Activated naive CD4-positive, alpha-beta T cell treated with anti-CD3 and anti-CD28 coated beads for 36 hours (primary cell): ENCODE measurements at regions of chr7 and their contacts with region 1.

Region 1: DNA sequence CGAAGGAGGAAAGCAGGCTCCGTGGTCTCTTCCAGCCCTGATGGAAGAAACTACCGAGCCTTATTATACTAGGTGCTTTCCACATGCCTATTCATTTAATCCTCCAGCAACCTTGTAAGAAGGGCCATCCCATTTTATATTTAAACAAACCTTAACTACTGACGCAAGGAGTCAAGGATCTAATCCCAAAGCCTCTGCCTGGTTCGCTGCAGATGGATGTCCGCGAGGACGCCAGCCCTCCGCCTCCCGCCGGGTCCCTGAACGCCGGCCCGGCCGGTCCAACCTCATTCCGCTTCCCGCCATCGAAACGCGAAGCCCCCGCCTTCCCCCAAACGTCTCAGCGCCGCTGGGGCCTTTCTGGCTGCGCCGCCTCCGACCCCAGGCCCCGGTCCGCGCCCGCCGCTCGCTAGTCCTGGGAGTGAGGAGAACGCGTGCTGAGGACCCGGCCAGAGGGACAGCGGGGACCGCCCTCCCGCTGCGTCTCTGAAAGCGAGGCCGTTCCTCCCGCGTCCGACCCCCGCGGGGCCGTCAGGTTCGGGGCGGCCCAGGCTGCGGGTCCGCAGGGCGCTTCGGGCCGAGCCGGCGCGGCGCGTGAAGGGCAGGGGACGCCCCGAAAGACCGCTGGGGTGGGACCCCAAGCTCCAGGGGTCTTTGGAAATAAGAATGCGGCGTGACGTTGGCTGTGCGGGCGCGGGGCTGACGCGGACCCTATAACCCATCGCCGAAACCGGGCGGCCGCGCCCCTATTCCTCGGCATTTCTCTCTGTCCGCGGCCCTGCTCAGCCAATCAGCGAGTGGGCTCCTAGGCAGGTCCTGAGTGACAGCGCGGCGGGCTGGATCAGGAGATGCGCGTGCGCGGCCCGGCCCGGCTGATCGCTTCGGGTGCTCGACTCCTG is at the start of gene ATP6V0E2:
- DNase-seq: peak; percentile 94
- H3K4me3 Mint-ChIP-seq: peak within 1 kb of the TSS; percentile 83
- H3K27ac Mint-ChIP-seq: peak within 1 kb of the TSS; percentile 88
- H3K4me1 Mint-ChIP-seq: peaks cover 72% of the 10 kb centered on the region
- H3K27me3 Mint-ChIP-seq: no peaks in the 10 kb centered on the region
- total RNA-seq, gene ATP6V0E2: 31.8 to 32.4 TPM

Region 2: GRCh38 chr7:149422129-149422913 is 451.0 kb before region 1 on chr7:
- CTCF ChIA-PET with region 1: no interaction called
- intact Hi-C with region 1: no loop called
- DNase-seq: peak; percentile 66
- H3K4me3 Mint-ChIP-seq: peak overlapping the region; percentile 67
- H3K27ac Mint-ChIP-seq: peak overlapping the region; percentile 65
- H3K4me1 Mint-ChIP-seq: peaks cover 7% of the 10 kb centered on the region
- H3K27me3 Mint-ChIP-seq: peaks cover 2% of the 10 kb centered on the region

Region 3: GRCh38 chr7:149598721-149599306 is 274.5 kb before region 1 on chr7:
- CTCF ChIA-PET with region 1: no interaction called
- intact Hi-C with region 1: loop called (anchors 2 kb)
- DNase-seq: peak; percentile 69
- H3K4me3 Mint-ChIP-seq: no peak overlapping the region
- H3K27ac Mint-ChIP-seq: peak overlapping the region; percentile 51
- H3K4me1 Mint-ChIP-seq: peaks cover 36% of the 10 kb centered on the region
- H3K27me3 Mint-ChIP-seq: no peaks in the 10 kb centered on the region

Region 4: GRCh38 chr7:149720372-149721248 is 152.7 kb before region 1 on chr7:
- CTCF ChIA-PET with region 1: no interaction called
- intact Hi-C with region 1: no loop called
- DNase-seq: no peak
- H3K4me3 Mint-ChIP-seq: no peak overlapping the region
- H3K27ac Mint-ChIP-seq: no peak overlapping the region
- H3K4me1 Mint-ChIP-seq: peaks cover 12% of the 10 kb centered on the region
- H3K27me3 Mint-ChIP-seq: no peaks in the 10 kb centered on the region

Region 5: DNA sequence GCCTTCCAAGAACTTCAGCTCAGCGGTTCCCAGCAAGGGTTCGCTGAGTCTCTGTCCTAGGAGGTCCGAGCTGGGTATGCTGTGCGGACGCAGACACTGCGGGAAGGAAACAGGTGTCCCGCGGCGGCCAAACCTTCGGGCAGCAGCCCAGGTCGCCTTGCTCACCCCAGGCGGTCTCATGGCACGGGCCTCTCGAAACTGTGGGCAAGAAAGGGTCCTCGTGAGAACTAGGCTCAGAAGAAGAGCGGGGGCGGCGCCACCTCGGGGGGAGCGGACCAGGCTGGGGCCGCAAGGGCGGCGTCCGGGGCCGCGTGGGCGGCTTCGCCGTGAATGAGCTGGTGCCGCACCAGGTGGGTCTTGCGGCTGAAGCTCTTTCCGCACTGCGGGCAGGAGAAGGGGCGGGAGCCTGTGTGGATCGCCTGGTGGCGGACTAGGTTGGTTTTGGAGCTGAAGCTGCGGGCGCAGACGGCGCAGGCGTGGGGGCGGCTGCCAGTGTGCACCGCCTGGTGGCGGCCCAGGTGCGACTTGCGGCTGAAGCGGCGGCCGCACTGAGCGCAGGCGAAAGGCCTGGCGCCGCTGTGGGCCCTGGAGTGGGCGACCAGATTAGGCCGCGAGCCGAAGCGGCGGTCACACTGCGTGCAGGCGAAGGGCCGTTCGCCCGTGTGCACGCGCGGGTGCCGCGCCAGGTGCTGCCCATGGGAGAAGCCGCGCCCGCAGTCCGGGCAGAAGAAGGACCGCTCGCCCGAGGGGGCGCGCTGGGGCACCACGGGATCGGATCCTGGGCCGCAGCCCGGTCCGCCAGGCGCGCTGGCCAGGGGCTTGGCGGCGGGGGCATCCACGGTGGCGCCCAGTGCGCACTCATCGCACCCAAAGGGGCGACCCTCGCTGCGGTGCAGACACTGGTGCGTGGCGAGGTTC is 108.6 kb before region 1 on chr7:
- CTCF ChIA-PET with region 1: no interaction called
- intact Hi-C with region 1: no loop called
- DNase-seq: no peak
- H3K4me3 Mint-ChIP-seq: no peak overlapping the region
- H3K27ac Mint-ChIP-seq: no peak overlapping the region
- H3K4me1 Mint-ChIP-seq: no peaks in the 10 kb centered on the region
- H3K27me3 Mint-ChIP-seq: no peaks in the 10 kb centered on the region

Region 6: GRCh38 chr7:149790146-149790548 is 83.2 kb before region 1 on chr7:
- CTCF ChIA-PET with region 1: no interaction called
- intact Hi-C with region 1: no loop called
- DNase-seq: peak; percentile 57
- H3K4me3 Mint-ChIP-seq: no peak overlapping the region
- H3K27ac Mint-ChIP-seq: no peak overlapping the region
- H3K4me1 Mint-ChIP-seq: peaks cover 3% of the 10 kb centered on the region
- H3K27me3 Mint-ChIP-seq: peaks cover 14% of the 10 kb centered on the region

Region 7: DNA sequence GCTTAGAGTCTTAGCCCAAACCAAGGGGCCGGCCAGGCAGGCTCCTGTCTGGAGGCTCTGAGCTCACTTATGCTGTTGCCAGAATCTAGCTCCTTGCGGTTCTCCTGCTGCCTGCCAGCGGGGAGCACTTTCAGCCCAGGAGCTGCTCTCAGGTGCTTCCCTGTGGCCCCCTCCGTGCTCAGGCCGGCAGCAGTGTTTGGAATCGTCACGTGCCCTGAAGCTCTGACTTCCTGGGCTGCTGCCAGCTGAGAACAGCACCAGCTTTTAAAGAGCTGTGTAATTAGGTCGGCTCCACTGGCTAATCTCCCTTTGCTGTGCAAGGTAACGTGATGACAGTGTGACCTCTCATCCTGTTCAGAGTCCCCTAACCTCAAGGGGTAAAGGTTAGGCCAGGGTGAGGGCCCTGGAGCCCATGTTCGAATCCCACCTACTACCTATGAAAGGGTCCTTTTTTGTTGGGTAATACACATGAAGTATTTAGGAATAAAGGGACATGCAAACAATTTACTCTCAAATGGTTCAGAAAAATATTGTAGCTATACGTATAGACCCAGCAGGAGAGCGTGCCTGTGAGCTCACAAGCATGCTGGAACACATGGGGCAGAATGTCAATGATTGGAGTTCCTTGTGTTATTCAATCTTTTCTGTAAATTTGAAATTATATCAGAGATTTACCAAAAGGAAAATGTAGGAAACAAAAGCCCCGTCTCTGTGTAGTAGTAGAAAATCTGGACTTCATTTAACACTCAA is 18.5 kb before region 1 on chr7:
- CTCF ChIA-PET with region 1: interaction called, 12 read pairs
- intact Hi-C with region 1: loop called (anchors 1 kb)
- DNase-seq: peak; percentile 70
- H3K4me3 Mint-ChIP-seq: no peak overlapping the region
- H3K27ac Mint-ChIP-seq: no peak overlapping the region
- H3K4me1 Mint-ChIP-seq: peaks cover 57% of the 10 kb centered on the region
- H3K27me3 Mint-ChIP-seq: no peaks in the 10 kb centered on the region

Region 8: DNA sequence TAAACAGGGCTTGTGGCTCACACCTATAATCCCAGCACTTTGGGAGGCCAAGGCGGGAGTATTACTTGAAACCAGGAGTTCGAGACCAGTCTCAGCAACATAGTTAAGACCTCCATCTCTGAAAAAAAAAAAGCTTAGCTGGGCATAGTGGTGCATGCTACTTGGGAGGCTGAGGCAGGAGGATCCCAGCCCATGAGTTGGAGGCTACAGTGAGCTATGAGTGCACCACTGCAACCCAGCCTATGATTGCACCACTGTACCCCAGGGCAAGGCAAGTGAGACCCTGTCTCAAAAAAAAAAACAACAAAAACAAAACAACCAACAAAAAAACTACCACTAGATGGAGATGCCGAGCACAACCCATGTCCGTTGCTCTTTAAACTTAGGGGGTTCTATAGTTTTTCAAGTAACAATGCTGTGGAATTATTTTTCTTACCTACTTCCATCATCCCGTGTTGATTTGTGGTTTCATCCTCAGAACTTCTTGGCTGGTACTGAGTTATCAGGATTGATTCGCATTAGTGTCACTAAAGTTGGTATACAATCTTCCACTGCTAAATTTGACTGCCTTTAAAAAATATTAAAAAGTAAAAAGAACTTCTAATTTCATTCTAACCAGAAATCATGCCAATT is 483.1 kb after region 1 on chr7:
- CTCF ChIA-PET with region 1: no interaction called
- intact Hi-C with region 1: loop called (anchors 5 kb)
- DNase-seq: peak; percentile 28
- H3K4me3 Mint-ChIP-seq: no peak overlapping the region
- H3K27ac Mint-ChIP-seq: no peak overlapping the region
- H3K4me1 Mint-ChIP-seq: peaks cover 40% of the 10 kb centered on the region
- H3K27me3 Mint-ChIP-seq: no peaks in the 10 kb centered on the region

Region 9: DNA sequence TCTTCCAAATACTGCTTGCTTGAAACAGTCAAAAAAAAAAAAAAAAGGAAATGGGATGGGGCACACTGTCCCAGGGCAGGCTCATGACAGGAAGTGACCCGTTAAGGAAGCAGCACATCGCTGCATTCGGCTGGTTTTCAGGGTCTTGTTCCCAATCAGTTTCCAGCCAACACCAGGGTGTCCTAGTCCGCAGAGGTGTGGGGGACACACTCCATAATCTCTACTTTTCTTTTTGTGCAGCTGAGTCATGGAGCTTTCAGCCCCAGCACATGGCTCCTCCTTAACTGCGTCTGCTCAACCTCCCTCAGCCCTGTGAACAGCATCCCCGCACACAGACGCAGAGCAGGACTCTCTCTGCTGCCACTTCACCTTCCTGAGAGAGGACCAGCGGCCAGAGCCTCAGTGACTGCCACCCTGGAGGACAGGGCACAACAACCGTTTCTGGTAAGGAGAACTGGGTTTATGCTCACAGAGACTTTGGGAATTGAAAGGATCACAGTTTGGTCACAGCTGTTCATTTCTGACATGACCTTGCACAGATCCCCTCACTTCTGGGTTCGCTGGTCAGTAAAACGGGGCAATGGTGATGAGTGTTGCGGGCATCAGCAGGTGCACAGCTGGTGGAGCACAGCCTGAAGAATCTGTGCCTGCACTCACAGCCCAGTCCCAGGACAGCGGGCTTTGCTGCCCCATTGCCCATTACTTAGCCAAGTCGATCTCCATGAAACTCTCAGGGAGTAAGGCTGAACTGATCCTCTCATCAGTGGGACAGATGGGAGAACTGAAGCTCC is 864.1 kb after region 1 on chr7 and contains the start of gene GIMAP5:
- CTCF ChIA-PET with region 1: no interaction called
- intact Hi-C with region 1: loop called (anchors 10 kb)
- DNase-seq: peak; percentile 66
- H3K4me3 Mint-ChIP-seq: peak within 1 kb of the TSS; percentile 88
- H3K27ac Mint-ChIP-seq: peak within 1 kb of the TSS; percentile 95
- H3K4me1 Mint-ChIP-seq: peaks cover 72% of the 10 kb centered on the region
- H3K27me3 Mint-ChIP-seq: no peaks in the 10 kb centered on the region
- total RNA-seq, gene GIMAP5: 32.1 to 32.3 TPM